ENCODE measurements at regions of chr2 and their contacts with region 1.

Region 1: GRCh38 chr2:37350034-37350433 is 5.6 kb downstream of the QPCT start:
- DNase-seq: no peak
- ATAC-seq: no peak
- H3K4me3 ChIP-seq: no peak overlapping the region
- H3K27ac ChIP-seq: no peak overlapping the region
- H3K4me1 ChIP-seq: no peaks in the 10 kb centered on the region
- H3K27me3 ChIP-seq: peaks cover 5% of the 10 kb centered on the region
- CTCF ChIP-seq: no peak
- POLR2A ChIP-seq: no peak
- RAD21 ChIP-seq: no peak

Region 2: GRCh38 chr2:37337642-37338310 is 12.3 kb before region 1 on chr2:
- CTCF ChIA-PET with region 1: no interaction called
- POLR2A ChIA-PET with region 1: no interaction called
- dilution Hi-C with region 1: no loop called
- in situ Hi-C with region 1: no loop called
- intact Hi-C with region 1: no loop called
- DNase-seq: peak; percentile 13
- ATAC-seq: no peak
- H3K4me3 ChIP-seq: no peak overlapping the region
- H3K27ac ChIP-seq: no peak overlapping the region
- H3K4me1 ChIP-seq: no peaks in the 10 kb centered on the region
- H3K27me3 ChIP-seq: no peaks in the 10 kb centered on the region; the same call in 1 of the 2 replicates
- CTCF ChIP-seq: no peak
- POLR2A ChIP-seq: no peak
- RAD21 ChIP-seq: no peak

Region 3: GRCh38 chr2:37365669-37366068 is 15.6 kb after region 1 on chr2:
- CTCF ChIA-PET with region 1: no interaction called
- POLR2A ChIA-PET with region 1: interaction called, 14 read pairs
- dilution Hi-C with region 1: no loop called
- in situ Hi-C with region 1: no loop called
- intact Hi-C with region 1: no loop called
- DNase-seq: no peak
- ATAC-seq: no peak
- H3K4me3 ChIP-seq: no peak overlapping the region
- H3K27ac ChIP-seq: no peak overlapping the region
- H3K4me1 ChIP-seq: no peaks in the 10 kb centered on the region
- H3K27me3 ChIP-seq: peaks cover 19% of the 10 kb centered on the region
- CTCF ChIP-seq: no peak
- POLR2A ChIP-seq: no peak
- RAD21 ChIP-seq: no peak